ENCODE measurements at regions of chr18 and their contacts with region 1.

Region 1: GRCh38 chr18:63518178-63519012 is 23.8 kb upstream of the SERPINB12 start:
- DNase-seq: peak; percentile 74
- H3K4me3 ChIP-seq: no peak overlapping the region
- H3K27ac ChIP-seq: no peak overlapping the region
- H3K4me1 ChIP-seq: peaks cover 0 to 5% (median 0%) of the 10 kb centered on the region in 4 donors
- H3K27me3 ChIP-seq: no peaks in the 10 kb centered on the region
- CTCF ChIP-seq: peak; percentile 70 to 79 (median 74)
- EP300 ChIP-seq: no peak
- POLR2A ChIP-seq: no peak

Region 2: GRCh38 chr18:63578357-63578958 is 60.1 kb after region 1 on chr18:
- intact Hi-C with region 1: loop called (anchors 2 kb)
- DNase-seq: no peak
- H3K4me3 ChIP-seq: no peak overlapping the region
- H3K27ac ChIP-seq: no peak overlapping the region
- H3K4me1 ChIP-seq: peaks cover 0 to 12% (median 2%) of the 10 kb centered on the region in 4 donors
- H3K27me3 ChIP-seq: no peaks in the 10 kb centered on the region
- CTCF ChIP-seq: peak; percentile 7 to 61 (median 52)
- EP300 ChIP-seq: no peak
- POLR2A ChIP-seq: no peak

Region 3: DNA sequence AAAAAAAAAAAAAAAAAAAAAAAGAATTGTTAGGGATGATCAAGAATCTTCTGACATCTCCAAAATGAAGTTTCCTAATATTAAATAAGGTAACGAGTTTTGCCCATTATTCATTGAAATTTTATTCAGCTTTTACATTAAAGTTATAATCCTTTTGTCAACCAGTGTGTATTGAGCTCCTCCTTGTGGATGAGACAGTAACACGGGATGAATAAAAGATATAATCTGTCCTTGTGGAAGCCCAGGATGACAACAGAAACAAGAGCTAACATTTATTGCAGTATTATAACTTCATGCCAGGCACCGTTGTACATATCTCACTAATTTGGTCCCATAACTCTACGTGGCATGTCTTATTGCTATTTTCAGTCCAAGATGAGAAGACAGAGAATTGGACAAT is 223.4 kb after region 1 on chr18:
- intact Hi-C with region 1: loop called (anchors 5 kb)
- DNase-seq: no peak
- H3K4me3 ChIP-seq: no peak overlapping the region
- H3K27ac ChIP-seq: no peak overlapping the region
- H3K4me1 ChIP-seq: no peaks in the 10 kb centered on the region
- H3K27me3 ChIP-seq: no peaks in the 10 kb centered on the region
- CTCF ChIP-seq: no peak
- EP300 ChIP-seq: no peak
- POLR2A ChIP-seq: no peak

Region 4: DNA sequence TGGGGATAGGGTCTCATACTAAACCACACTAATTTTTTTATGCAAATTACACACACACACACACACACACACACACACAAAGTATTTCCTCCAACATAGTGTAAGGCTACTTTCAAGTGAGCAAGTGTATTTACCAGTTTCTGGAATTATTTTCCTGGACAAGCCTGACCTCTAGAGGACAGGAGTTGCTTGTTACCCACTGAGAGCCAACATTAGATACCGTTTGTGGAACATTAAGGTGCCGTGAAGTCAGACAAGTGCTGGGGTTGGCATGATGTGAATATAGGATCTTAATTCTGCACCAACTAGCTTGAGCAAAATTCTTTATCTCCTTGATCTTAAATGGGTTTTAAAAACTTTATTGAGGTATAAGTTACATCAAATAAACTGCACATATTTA is 329.8 kb after region 1 on chr18:
- intact Hi-C with region 1: loop called (anchors 2 kb)
- DNase-seq: no peak
- H3K4me3 ChIP-seq: no peak overlapping the region
- H3K27ac ChIP-seq: no peak overlapping the region
- H3K4me1 ChIP-seq: peaks cover 0 to 6% (median 0%) of the 10 kb centered on the region in 4 donors
- H3K27me3 ChIP-seq: no peaks in the 10 kb centered on the region
- CTCF ChIP-seq: peak in 3 of 4 experiments; percentile 44 to 65 (median 45)
- EP300 ChIP-seq: no peak
- POLR2A ChIP-seq: no peak

Region 5: DNA sequence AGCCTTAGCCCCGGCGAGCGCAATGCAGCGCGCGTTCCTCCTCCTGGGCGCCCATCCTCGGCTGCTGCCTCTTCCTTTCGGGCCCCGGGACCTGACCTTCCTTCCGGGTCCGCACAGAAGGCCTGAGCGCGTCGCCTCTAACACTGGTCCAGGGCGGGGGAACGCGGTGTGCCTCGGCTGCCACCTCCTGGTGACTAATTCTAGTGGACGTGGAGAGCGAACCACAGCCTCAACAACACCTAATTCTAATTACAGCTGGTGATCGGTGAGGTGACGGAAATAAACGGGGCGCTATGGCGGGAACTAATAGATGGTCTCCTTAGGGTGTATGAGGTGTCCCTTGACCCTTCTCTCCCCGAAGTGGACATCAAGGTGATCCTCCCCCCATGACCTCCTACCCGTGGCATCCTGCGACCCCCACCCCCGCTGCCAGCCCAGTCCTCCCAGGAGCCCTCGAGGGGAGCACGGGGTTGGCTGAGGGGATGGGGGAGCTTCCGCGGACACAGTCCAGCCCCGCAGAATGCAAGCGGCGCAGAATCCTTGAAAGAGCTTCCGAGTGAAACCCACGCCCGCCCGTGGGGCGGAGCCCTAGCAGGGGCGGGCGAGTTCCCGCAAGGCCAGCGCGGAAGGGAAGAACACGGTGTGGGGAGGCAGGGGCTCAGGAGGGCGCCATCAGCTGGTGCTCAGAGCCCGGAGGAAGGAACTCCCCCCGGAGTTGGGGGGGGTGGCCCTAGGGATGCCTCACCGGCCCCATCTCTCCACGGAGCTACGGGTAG is 417.9 kb after region 1 on chr18:
- intact Hi-C with region 1: loop called (anchors 5 kb)
- DNase-seq: peak; percentile 88
- H3K4me3 ChIP-seq: peak overlapping the region; percentile 34 to 61 (median 50)
- H3K27ac ChIP-seq: peak overlapping the region in 1 of 4 donors; percentile 5
- H3K4me1 ChIP-seq: peaks cover 0 to 12% (median 9%) of the 10 kb centered on the region in 4 donors
- H3K27me3 ChIP-seq: peaks cover 0 to 8% (median 0%) of the 10 kb centered on the region in 3 donors
- CTCF ChIP-seq: peak; percentile 20 to 79 (median 42)
- EP300 ChIP-seq: no peak
- POLR2A ChIP-seq: no peak

Region 6: DNA sequence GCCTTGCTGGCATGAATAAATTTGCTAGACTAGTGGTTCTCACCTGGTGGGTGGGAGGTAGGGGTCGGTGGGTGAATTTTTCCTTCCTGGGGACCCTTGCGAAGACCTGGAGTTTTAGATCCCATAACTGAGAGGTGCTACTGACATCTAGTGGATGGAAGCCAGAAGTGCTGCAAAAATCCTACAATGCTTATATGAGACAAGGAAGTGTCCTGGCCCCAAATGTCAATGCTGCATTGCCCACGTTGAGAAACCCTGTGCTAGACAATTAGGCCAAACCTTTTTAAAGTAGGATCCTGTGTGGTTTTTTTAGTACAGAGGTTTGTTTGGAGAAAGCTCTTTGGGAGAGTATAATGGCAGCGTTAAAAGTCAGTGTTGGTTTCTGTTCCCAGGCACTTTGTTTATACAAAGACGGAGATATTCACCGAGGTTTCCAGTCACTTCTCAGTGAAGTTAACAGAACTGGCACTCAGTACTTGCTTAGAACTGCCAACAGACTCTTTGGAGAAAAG is 461.1 kb after region 1 on chr18:
- intact Hi-C with region 1: loop called (anchors 10 kb)
- DNase-seq: peak; percentile 69
- H3K4me3 ChIP-seq: peak overlapping the region; percentile 21 to 44 (median 36)
- H3K27ac ChIP-seq: peak overlapping the region; percentile 60 to 77 (median 76)
- H3K4me1 ChIP-seq: peaks cover 0 to 14% (median 3%) of the 10 kb centered on the region in 4 donors
- H3K27me3 ChIP-seq: no peaks in the 10 kb centered on the region
- CTCF ChIP-seq: peak; percentile 38 to 89 (median 70)
- EP300 ChIP-seq: no peak
- POLR2A ChIP-seq: no peak

Measured in sigmoid colon (tissue), 7 donors.